Heart right ventricle (tissue), 16 donors: ENCODE measurements at regions of chr4 and their contacts with region 1.

Region 1: DNA sequence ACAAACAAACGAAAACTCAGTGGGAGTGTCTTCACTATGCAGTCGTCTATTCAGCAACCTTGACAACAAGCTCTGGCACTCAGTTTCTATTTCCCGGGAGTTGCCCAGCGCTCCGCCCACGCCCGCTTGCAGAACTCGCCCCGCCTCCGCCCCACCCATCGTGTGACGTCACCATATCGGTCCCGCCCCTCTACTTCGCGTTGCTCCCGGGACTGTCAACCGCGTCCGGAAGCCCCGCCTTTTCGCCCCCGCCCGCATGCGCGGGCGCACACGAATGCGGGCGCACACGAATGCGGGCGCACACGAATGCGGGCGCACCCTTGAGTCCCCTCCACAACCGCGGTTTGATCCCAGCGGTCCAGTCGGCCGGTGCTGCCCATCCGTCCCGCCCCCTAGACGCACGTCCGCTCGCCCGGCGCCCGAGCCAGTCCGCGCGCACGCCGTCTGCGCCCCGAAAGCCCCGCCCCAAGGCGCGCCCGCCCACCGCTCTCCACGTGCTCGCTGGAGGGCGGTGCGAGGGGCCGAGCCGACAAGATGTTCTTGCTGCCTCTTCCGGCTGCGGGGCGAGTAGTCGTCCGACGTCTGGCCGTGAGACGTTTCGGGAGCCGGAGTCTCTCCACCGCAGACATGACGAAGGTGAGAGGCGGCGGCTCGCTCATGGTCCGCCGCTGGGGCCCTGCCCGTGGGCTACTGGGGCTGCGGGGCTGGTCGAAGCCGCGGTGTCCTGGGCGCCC is at the start of gene LAP3:
- DNase-seq: peak; percentile 98 to 99
- ATAC-seq: peak; percentile 96 to 100 (median 98)
- H3K4me3 ChIP-seq: peak within 1 kb of the TSS; percentile 58 to 100 (median 78)
- H3K27ac ChIP-seq: peak within 1 kb of the TSS; percentile 82 to 99 (median 94)
- H3K4me1 ChIP-seq: peaks cover 0 to 52% (median 30%) of the 10 kb centered on the region in 9 donors
- H3K27me3 ChIP-seq: no peaks in the 10 kb centered on the region
- CTCF ChIP-seq: no peak
- total RNA-seq, gene LAP3: 55.5 to 222 (median 65.4) TPM

Region 2: GRCh38 chr4:16480011-16480410 is 1097.1 kb before region 1 on chr4:
- intact Hi-C with region 1: no loop called
- DNase-seq: no peak
- ATAC-seq: no peak
- H3K4me3 ChIP-seq: no peak overlapping the region
- H3K27ac ChIP-seq: no peak overlapping the region
- H3K4me1 ChIP-seq: peaks cover 0 to 12% (median 0%) of the 10 kb centered on the region in 9 donors
- H3K27me3 ChIP-seq: no peaks in the 10 kb centered on the region
- CTCF ChIP-seq: no peak

Region 3: DNA sequence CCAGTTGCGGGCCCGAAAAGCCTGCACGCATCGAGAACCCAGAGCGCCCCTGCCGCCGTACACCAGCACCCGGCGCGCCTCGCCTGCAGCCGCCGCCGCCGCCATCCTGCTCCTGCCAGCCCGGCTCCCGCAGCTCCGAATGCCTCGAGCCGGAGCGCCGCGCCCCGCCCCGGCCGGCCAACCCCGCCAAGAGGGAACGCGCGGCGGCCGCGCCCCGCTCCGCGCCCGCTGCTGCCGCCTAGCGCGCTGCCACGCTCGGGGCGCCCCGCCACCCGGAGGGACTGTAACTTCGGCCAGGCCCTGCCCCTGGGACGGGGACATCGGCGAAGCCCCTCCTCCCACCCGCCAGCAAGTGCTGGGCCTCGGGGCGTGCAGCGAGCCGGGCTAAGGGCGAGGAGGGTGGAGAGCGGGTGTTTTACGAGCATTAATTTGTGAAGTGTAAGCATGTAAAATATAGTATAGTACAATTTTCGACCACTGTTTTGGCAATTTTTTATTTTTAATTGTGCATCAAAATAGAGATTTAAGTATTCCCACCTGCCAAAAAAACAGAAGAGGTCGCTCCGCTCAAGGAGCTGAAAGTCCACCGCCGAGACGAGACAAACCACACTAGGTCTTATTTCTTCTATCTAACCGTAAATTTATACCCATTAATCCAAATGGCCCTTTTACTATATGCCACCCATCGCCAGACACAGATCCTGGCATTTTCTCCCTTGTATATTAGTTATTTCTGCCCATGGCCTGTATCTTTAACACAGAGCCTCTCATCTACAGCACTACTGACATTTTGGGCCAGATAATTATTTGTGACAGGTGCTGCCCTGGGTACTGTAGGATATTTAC is 64.9 kb before region 1 on chr4 and contains the start of gene QDPR:
- intact Hi-C with region 1: loop called in 1 of 10 experiments (anchors 5 kb)
- DNase-seq: peak; percentile 81 to 90
- ATAC-seq: peak; percentile 88 to 96 (median 95)
- H3K4me3 ChIP-seq: peak within 1 kb of the TSS; percentile 62 to 93 (median 80)
- H3K27ac ChIP-seq: peak within 1 kb of the TSS in 9 of 10 donors; percentile 64 to 85 (median 77)
- H3K4me1 ChIP-seq: peaks cover 0 to 27% (median 19%) of the 10 kb centered on the region in 9 donors
- H3K27me3 ChIP-seq: peaks cover 0 to 18% (median under 1%) of the 10 kb centered on the region in 7 donors
- CTCF ChIP-seq: peak in 8 of 9 donors; percentile 5 to 67 (median 44)
- total RNA-seq, gene QDPR: 43.4 to 68.4 (median 58.4) TPM

Region 4: DNA sequence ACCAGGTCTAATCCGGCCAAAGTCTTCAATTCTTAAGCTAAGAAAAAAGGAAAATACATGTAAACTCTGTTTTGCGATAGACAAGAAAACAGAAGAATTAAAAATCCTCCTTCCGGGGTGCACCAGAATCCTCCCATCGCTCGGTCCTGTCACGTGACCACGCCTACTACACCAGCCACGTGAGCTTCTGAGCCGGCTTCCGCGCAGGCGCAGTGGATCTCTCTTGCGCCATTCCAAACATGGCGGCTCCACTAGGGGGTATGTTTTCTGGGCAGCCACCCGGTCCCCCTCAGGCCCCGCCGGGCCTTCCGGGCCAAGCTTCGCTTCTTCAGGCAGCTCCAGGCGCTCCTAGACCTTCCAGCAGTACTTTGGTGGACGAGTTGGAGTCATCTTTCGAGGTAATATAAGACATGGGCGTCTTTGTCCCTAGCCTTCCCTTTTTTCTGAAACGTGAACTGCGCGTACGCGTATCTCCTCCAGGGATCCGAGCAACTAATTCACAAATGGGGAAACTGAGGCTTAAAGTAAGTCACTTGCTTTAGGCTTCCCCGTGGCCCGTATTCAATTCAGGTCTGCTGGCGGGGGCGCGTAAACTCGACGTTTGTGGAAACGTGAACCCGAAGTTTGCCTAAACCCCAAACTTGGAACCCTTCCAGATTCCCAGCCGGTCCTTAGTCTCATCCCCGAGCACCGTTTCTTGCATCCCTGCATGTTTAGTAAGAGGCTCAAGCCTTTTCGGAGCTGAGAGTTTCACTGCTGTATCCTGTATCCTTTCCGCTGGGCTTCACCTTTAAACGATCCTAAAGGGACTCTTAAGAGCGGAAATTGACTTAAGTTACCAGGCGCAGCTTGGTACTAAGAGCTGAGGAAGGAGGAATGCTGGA is 37.6 kb after region 1 on chr4 and contains the start of gene MED28:
- intact Hi-C with region 1: loop called in 8 of 10 experiments (anchors 2 to 5 kb)
- DNase-seq: peak; percentile 95 to 96
- ATAC-seq: peak; percentile 94 to 99 (median 98)
- H3K4me3 ChIP-seq: peak within 1 kb of the TSS; percentile 66 to 100 (median 87)
- H3K27ac ChIP-seq: peak within 1 kb of the TSS; percentile 43 to 98 (median 84)
- H3K4me1 ChIP-seq: peaks cover 10 to 50% (median 45%) of the 10 kb centered on the region in 9 donors
- H3K27me3 ChIP-seq: no peaks in the 10 kb centered on the region
- CTCF ChIP-seq: peak in 4 of 9 donors; percentile 21 to 43 (median 26)
- total RNA-seq, gene MED28: 13.8 to 23.1 (median 17.4) TPM

Region 5: DNA sequence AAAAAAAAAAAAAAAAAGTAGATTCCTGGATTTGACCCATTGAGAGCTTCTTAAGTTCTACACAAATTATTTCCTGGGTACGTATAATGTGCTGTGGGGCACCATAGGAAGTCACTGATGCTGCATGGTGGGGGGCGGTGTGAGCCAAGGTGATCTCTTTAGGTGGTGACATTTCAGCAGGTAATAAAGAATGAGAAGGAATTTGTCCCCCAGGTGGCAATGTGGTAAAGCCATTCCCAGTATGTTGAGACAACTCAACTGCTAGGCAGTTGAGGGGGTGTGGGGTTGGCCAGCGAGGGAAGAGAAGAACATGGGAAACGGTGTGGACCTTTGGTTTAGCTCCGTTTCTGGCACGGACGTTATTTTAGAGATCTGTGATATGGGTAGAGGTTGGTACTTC is 169.9 kb after region 1 on chr4:
- intact Hi-C with region 1: no loop called
- DNase-seq: no peak
- ATAC-seq: no peak
- H3K4me3 ChIP-seq: no peak overlapping the region
- H3K27ac ChIP-seq: no peak overlapping the region
- H3K4me1 ChIP-seq: no peaks in the 10 kb centered on the region
- H3K27me3 ChIP-seq: no peaks in the 10 kb centered on the region
- CTCF ChIP-seq: no peak